ENCODE measurements at regions of chr6 and their contacts with region 1.

Region 1: GRCh38 chr6:154937306-154938220 is 57.6 kb upstream of the TIAM2 start:
- DNase-seq: no peak
- ATAC-seq: no peak
- H3K4me3 ChIP-seq: no peak overlapping the region
- H3K27ac ChIP-seq: no peak overlapping the region
- H3K4me1 ChIP-seq: no peaks in the 10 kb centered on the region
- H3K27me3 ChIP-seq: no peaks in the 10 kb centered on the region

Region 2: GRCh38 chr6:154916857-154917256 is 20.7 kb before region 1 on chr6:
- intact Hi-C with region 1: loop called in 1 of 2 experiments (anchors 2 kb)
- DNase-seq: no peak
- ATAC-seq: no peak
- H3K4me3 ChIP-seq: no peak overlapping the region
- H3K27ac ChIP-seq: no peak overlapping the region
- H3K4me1 ChIP-seq: no peaks in the 10 kb centered on the region
- H3K27me3 ChIP-seq: no peaks in the 10 kb centered on the region

Region 3: GRCh38 chr6:155066361-155066760 is 128.8 kb after region 1 on chr6:
- intact Hi-C with region 1: no loop called
- DNase-seq: no peak
- ATAC-seq: no peak
- H3K4me3 ChIP-seq: no peak overlapping the region
- H3K27ac ChIP-seq: no peak overlapping the region
- H3K4me1 ChIP-seq: peaks cover 3% of the 10 kb centered on the region in 2 donors
- H3K27me3 ChIP-seq: no peaks in the 10 kb centered on the region